Left ventricle myocardium superior (tissue), 1 donor: ENCODE measurements at regions of chr21 and their contacts with region 1.

Region 1: DNA sequence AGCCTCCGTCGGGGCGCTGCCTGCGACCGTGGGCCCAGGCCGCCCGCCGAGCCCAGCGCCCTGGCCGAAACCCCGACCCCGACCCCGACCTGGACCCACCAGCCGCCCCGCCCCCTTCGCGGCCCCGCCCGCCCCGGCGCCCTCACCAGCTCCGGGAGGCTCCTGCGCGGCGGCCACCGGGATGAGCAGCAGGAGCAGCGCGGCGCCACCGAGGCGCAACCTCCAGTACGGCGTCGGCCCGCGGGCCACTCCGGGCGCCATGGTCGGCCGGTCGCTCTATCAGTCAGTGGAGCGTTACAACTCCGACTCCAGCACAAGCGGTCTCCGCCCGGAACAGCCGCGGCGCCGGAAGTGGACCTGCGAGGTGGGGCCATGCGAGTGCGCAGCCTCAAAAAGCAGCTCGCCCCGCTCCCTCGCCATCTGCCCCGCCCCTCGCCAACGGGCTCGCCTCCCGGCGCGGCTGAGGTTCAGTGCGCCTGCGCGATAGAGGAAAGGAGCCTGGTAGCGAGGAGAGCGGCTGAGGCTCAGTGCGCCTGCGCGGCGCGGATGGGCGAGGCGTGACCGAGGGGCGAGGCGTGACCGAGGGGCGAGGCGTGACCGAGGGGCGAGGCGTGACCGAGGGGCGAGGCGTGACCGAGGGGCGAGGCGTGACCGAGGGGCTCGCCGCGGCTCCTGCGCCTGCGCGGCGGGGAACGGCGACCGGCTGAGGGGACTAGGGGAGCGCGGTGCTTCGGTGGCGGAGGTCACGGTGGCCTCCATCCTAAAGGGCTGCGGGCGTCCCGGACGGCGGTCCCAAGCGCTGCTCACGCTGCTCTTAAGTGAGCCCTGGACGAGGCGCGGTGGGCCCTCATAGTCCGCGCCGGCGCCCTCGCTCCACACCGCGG is at the start of gene PTTG1IP:
- DNase-seq: peak; percentile 100
- ATAC-seq: peak; percentile 82
- total RNA-seq, gene PTTG1IP: 143 TPM

Region 2: DNA sequence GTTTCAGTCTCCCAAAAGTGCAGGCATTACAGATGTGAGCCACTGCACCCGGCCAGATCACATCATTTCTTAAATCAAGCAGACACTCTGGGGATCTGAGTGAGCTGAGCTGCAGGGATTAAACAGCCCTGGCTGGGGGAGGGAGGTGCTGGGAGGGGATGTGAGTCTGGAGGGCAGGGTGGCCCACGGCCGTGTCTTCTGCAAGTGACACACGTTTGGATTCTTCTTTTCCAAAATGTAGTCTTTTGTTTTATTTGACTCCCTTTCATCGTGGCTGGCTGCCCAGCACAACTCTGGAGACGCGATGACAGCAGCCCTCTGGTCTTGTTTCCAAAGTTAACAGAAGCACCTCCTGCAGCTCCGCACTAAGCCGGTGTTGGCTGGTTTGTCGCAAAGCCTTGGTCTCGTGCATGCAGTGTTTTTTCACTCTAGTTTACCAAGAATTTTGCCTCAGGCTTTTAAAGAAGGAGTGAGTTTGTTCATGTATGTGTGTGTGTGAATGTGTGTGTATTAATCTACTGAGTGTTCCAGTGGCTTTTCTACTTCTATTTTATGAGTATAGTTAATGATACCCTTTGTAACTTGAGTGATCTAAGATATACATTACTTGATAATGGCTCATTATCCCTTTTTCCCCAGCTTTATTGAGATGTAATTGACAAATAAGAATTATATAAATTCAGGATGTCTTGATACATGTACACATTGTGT is 290.4 kb before region 1 on chr21:
- intact Hi-C with region 1: no loop called
- DNase-seq: peak; percentile 58
- ATAC-seq: peak; percentile 84

Region 3: GRCh38 chr21:44792702-44793591 is 80.7 kb before region 1 on chr21:
- intact Hi-C with region 1: loop called (anchors 10 kb)
- DNase-seq: peak; percentile 68
- ATAC-seq: peak; percentile 90